Activated CD4-positive, alpha-beta memory T cell treated with anti-CD3 and anti-CD28 coated beads, Interleukin-2, amount 10 ng/mL, durations not matched to agents 7 days and 5 days (primary cell): ENCODE measurements at regions of chr16 and their contacts with region 1.

Region 1: DNA sequence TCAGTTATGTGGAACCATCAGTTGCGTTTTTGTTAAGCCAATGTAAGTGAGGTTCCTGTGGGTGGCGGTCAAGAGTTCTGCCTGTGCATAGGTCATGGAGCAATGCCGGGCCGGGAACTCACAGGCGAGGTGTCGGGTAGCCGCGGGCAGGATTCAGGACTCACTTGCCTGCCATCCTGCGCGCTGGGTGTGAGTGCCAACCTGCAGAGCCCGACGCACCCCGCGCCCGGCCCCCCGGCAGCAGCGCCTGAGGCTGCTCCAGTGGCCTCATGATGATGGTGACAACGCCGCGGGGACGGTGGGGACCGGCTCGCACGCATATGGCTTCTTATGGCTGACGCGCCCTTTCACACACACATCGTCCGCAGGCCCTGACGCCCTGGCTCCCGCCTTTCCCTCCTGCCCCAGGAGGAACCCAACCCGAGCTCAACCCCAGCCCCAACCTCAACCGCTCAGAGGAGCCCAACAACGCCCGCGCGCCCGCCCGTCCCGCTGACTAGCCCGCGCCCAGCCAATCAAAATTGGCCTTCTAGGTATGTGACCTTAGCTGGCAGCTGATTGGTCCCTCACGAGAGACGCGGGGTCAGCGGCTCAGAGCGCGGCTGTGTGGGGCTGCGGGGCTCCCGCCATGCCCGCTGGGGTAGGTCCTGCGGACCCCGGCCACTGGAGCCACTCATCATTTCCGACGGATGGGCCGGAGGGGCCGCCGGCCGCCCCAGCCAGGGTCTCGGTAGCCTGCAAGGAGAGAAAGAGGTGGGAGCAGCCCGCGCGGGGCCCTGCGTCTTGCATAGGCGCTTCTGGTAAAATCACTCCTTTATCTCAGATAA is at the start of gene C16orf95:
- DNase-seq: peak; percentile 96
- H3K4me3 Mint-ChIP-seq: peak within 1 kb of the TSS; percentile 99
- H3K27ac Mint-ChIP-seq: peak within 1 kb of the TSS; percentile 97
- H3K4me1 Mint-ChIP-seq: peaks cover 27% of the 10 kb centered on the region
- H3K27me3 Mint-ChIP-seq: no peaks in the 10 kb centered on the region
- total RNA-seq, gene C16orf95: 8.6 to 9.6 TPM

Region 2: DNA sequence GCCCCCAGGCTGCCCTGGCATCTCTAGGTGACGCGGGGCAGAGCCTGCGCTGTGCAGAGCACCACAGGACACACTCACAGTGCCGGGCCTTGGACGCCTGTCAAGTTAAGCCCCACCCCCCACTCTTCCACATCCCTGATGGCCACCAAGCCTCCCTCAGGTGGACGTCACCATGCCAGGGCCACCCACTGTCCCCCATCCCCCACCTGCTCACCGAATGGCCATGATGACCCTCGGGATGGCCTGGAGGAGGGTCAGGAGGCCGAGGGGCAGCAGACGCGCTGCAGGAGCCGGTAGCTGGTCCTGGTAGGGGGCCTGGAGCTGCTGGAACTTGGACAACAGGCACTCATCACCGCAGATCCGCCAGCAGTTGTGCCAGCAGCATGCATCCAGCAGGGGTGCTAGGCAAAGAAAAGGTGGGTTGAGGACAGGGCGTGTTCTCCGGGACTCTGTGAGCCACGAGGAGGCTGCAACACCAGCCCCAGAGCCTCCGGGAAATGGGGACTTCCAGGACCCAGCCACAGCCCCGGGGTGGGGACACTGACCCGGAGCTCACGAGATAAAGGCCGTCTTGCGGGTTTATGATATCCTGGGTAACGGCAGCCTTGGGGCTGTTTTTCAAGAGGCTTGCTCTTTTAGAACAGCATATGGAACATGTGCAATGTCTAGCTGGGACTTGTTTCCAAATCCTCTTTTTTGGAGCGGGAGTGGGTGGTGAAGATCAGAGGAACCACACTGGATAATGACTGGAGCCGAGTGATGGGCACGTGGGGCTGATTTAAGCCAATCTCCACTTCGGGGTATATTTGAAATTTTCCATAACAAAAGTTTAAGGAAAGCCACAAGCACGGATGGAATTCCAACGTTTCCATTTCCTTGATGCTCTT is 11.4 kb before region 1 on chr16:
- CTCF ChIA-PET with region 1: interaction called, 5 read pairs
- POLR2A ChIA-PET with region 1: interaction called, 31 read pairs
- DNase-seq: no peak
- H3K4me3 Mint-ChIP-seq: no peak overlapping the region
- H3K27ac Mint-ChIP-seq: no peak overlapping the region
- H3K4me1 Mint-ChIP-seq: peaks cover 36% of the 10 kb centered on the region
- H3K27me3 Mint-ChIP-seq: no peaks in the 10 kb centered on the region

Region 3: GRCh38 chr16:87387942-87388817 is 71.0 kb after region 1 on chr16:
- CTCF ChIA-PET with region 1: interaction called, 16 read pairs
- POLR2A ChIA-PET with region 1: interaction called, 70 read pairs
- DNase-seq: peak; percentile 92
- H3K4me3 Mint-ChIP-seq: peak overlapping the region; percentile 67
- H3K27ac Mint-ChIP-seq: peak overlapping the region; percentile 97
- H3K4me1 Mint-ChIP-seq: peaks cover 56% of the 10 kb centered on the region
- H3K27me3 Mint-ChIP-seq: no peaks in the 10 kb centered on the region

Region 4: GRCh38 chr16:87571136-87571867 is 254.2 kb after region 1 on chr16:
- CTCF ChIA-PET with region 1: no interaction called
- POLR2A ChIA-PET with region 1: no interaction called
- DNase-seq: no peak
- H3K4me3 Mint-ChIP-seq: no peak overlapping the region
- H3K27ac Mint-ChIP-seq: no peak overlapping the region
- H3K4me1 Mint-ChIP-seq: no peaks in the 10 kb centered on the region
- H3K27me3 Mint-ChIP-seq: peaks cover 5% of the 10 kb centered on the region

Region 5: DNA sequence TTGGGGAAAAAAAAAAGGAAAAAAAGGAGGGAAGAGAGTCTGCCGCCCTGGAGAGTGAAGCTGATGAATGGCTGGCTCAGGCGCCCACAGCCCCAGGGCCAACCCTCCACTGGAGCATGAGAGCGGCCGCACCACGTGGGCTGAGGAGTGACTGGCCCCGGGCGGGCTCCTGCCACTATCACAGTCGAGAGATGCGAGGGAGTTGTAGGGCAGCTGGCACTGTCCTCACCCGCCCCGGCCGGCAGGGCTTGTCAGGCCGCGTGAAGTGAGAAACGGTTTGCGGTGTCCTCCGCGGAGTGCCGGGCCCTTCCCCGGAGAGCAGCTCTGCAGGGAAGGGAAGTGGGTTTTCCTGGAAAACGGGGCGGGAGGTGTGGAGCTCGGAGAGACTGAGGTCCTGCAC is 331.1 kb after region 1 on chr16:
- CTCF ChIA-PET with region 1: no interaction called
- POLR2A ChIA-PET with region 1: no interaction called
- DNase-seq: no peak
- H3K4me3 Mint-ChIP-seq: no peak overlapping the region
- H3K27ac Mint-ChIP-seq: no peak overlapping the region
- H3K4me1 Mint-ChIP-seq: no peaks in the 10 kb centered on the region
- H3K27me3 Mint-ChIP-seq: peaks cover 4% of the 10 kb centered on the region